Posterior vena cava (tissue), 2 donors: ENCODE measurements at regions of chr1 and their contacts with region 1.

Region 1: DNA sequence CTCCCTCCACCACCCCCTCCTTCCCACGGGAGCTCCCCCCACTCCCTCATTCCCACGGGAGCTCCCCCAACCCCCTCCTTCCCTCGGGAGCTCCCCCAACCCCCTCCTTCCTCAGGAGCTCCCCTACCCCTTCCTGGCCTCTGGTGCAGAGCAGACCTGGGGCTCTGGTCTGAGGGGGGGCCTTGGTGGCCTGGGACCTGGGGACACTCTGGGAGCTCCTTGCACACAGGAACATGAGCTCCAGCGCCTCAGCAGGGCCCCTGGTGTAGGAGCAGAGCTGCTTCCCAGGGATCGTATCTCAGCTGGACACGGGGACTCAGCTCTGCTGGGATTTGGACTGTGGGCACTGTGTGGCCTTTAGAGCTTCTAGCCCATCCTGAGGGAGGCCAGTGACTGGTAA is 19.7 kb upstream of the PRSS38 start:
- DNase-seq: no peak

Region 2: GRCh38 chr1:227521782-227522181 is 273.9 kb before region 1 on chr1:
- intact Hi-C with region 1: no loop called
- DNase-seq: peak; percentile 48

Region 3: GRCh38 chr1:227712648-227713047 is 83.1 kb before region 1 on chr1:
- intact Hi-C with region 1: no loop called
- DNase-seq: no peak

Region 4: GRCh38 chr1:227869851-227870305 is 74.1 kb after region 1 on chr1:
- intact Hi-C with region 1: loop called in 1 of 2 experiments (anchors 1 kb)
- DNase-seq: no peak